CD4-positive, alpha-beta memory T cell (primary cell): ENCODE measurements at regions of chr6 and their contacts with region 1.

Region 1: DNA sequence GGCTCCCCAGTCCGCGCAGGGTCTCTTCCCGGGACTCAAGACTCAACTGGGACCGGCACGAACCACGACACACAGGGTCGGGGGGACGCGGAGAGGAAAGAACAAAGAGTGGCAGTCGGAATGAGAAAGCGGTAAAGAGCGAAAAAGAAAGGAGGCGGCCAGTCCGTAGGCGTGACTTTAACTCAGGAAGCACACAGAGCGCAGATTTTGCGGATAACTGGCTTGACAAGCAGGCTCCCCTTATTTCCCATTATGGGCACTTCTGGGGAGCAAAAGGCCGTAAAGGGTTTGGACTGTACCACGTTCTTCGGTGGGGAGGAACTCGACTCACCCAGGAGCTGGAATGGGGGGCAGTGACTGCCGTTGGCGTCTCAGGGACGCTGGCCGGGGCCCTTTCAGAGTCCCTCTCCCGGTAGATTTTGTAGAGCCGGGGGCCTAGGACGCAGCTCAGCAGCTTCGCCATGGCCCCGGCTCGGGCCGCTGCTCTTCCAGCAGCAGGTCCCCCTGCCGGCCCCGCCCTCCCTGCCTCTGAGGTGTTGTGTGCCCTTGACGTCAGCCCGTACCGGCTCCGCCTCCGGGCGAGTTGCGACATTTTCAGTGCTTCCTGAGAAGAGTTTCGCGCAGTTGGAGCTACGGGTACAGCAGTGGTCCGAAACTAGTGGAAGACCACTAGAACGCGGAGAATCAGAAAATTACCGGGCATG is at the start of gene ABHD16A:
- DNase-seq: peak; percentile 96 to 98 (median 97)
- H3K4me3 ChIP-seq: peak within 1 kb of the TSS; percentile 70 to 82
- H3K4me3 Mint-ChIP-seq: peak within 1 kb of the TSS; percentile 97 to 99 (median 98)
- H3K27ac ChIP-seq: peak within 1 kb of the TSS; percentile 97
- H3K27ac Mint-ChIP-seq: peak within 1 kb of the TSS; percentile 93 to 99 (median 98)
- H3K4me1 ChIP-seq: peaks cover 28% of the 10 kb centered on the region
- H3K4me1 Mint-ChIP-seq: peaks cover 21 to 44% (median 34%) of the 10 kb centered on the region in 4 donors
- H3K27me3 ChIP-seq: no peaks in the 10 kb centered on the region
- H3K27me3 Mint-ChIP-seq: no peaks in the 10 kb centered on the region
- total RNA-seq, gene ABHD16A: 66.0 to 69.2 TPM

Region 2: DNA sequence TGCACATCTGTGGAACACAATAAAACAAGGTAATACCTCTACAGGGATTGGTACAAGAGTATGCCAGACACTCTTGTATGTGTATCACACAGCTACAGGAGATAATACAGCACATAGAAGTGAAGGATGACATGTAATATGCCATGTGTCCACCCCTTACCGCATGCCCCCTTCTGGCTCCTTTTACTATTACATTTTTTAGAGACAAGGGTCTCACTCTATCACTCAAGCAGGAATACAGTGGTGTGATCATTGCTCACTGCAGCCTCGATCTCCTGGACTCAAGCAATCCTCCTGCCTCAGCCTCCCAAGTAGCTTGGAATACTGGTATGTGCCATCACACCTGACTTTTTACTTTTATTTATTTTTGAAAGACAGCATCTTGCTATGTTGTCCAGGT is 106.0 kb before region 1 on chr6:
- CTCF ChIA-PET with region 1: no interaction called
- POLR2A ChIA-PET with region 1: no interaction called
- intact Hi-C with region 1: no loop called
- DNase-seq: peak; percentile 66 to 79 (median 75)
- H3K4me3 ChIP-seq: no peak overlapping the region
- H3K4me3 Mint-ChIP-seq: peak overlapping the region in 5 of 8 donors; percentile 33 to 66 (median 43)
- H3K27ac ChIP-seq: no peak overlapping the region
- H3K27ac Mint-ChIP-seq: peak overlapping the region; percentile 60 to 89 (median 77)
- H3K4me1 ChIP-seq: peaks cover 60% of the 10 kb centered on the region
- H3K4me1 Mint-ChIP-seq: peaks cover 27 to 56% (median 45%) of the 10 kb centered on the region in 4 donors
- H3K27me3 ChIP-seq: no peaks in the 10 kb centered on the region
- H3K27me3 Mint-ChIP-seq: no peaks in the 10 kb centered on the region

Region 3: GRCh38 chr6:31619805-31620585 is 83.0 kb before region 1 on chr6:
- CTCF ChIA-PET with region 1: no interaction called
- POLR2A ChIA-PET with region 1: no interaction called
- intact Hi-C with region 1: loop called (anchors 1 kb)
- DNase-seq: peak; percentile 96 to 98 (median 98)
- H3K4me3 ChIP-seq: peak overlapping the region in 1 of 2 donors; percentile 93
- H3K4me3 Mint-ChIP-seq: peak overlapping the region; percentile 89 to 98 (median 93)
- H3K27ac ChIP-seq: peak overlapping the region; percentile 99
- H3K27ac Mint-ChIP-seq: peak overlapping the region; percentile 91 to 99 (median 98)
- H3K4me1 ChIP-seq: peaks cover 34% of the 10 kb centered on the region
- H3K4me1 Mint-ChIP-seq: peaks cover 21 to 49% (median 39%) of the 10 kb centered on the region in 4 donors
- H3K27me3 ChIP-seq: no peaks in the 10 kb centered on the region
- H3K27me3 Mint-ChIP-seq: no peaks in the 10 kb centered on the region

Region 4: DNA sequence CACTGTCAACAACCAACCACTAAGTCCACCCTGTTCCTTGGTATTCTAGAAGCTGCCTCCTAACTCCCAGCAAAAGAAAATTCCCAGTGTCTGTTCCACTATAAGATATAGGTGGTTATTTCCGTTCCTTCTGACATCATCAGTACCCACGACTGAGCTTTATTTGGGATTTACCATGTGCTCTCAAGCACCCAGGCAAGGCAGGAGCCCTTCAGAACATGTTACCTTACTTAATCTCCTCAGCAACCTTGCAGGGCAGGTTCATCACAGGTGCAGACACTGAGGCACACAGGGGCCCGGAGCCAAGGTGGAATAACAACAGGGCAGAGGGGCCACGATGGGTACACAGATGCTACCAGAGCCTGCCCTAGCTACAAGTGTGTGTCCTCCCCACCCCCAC is 10.6 kb before region 1 on chr6:
- CTCF ChIA-PET with region 1: no interaction called
- POLR2A ChIA-PET with region 1: interaction called, 15 read pairs
- intact Hi-C with region 1: no loop called
- DNase-seq: no peak
- H3K4me3 ChIP-seq: no peak overlapping the region
- H3K4me3 Mint-ChIP-seq: no peak overlapping the region
- H3K27ac ChIP-seq: no peak overlapping the region
- H3K27ac Mint-ChIP-seq: peak overlapping the region in 5 of 7 donors; percentile 7 to 63 (median 27)
- H3K4me1 ChIP-seq: peaks cover 2% of the 10 kb centered on the region
- H3K4me1 Mint-ChIP-seq: peaks cover 2 to 4% (median 2%) of the 10 kb centered on the region in 4 donors
- H3K27me3 ChIP-seq: no peaks in the 10 kb centered on the region
- H3K27me3 Mint-ChIP-seq: no peaks in the 10 kb centered on the region

Region 5: DNA sequence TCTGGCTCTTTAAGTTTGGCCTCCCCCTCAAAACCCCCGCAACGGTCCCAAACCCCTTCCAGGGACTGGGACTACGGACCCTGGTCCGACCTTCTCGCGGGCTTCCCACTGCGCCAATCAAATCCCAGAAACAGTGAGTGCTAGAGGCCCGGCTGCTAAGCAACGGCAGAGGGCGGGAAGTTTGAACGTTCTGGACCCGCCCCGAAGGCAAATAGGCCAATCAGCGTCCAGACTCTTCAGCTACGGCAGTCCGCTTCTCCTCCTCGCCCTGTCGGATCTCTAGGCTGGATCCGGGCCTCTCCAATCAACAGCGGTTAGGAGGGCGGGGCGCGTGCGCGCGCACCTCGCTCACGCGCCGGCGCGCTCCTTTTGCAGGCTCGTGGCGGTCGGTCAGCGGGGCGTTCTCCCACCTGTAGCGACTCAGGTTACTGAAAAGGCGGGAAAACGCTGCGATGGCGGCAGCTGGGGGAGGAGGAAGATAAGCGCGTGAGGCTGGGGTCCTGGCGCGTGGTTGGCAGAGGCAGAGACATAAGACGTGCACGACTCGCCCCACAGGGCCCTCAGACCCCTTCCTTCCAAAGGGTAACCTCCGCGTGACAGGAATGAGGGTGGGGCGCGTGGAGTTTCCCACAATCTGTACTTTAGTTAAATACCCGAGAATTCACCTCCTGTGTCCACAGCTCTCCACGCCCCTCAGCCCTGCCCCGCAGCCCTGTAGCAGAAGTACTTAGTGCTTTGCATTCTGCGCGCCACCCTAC is 36.8 kb after region 1 on chr6 and contains the start of gene MSH5:
- CTCF ChIA-PET with region 1: no interaction called
- POLR2A ChIA-PET with region 1: interaction called, 12 read pairs
- intact Hi-C with region 1: loop called (anchors 2 kb)
- DNase-seq: peak; percentile 92 to 97 (median 94)
- H3K4me3 ChIP-seq: peak within 1 kb of the TSS; percentile 82
- H3K4me3 Mint-ChIP-seq: peak within 1 kb of the TSS; percentile 89 to 99 (median 98)
- H3K27ac ChIP-seq: peak within 1 kb of the TSS; percentile 64
- H3K27ac Mint-ChIP-seq: peak within 1 kb of the TSS; percentile 94 to 97 (median 95)
- H3K4me1 ChIP-seq: peaks cover 42% of the 10 kb centered on the region
- H3K4me1 Mint-ChIP-seq: peaks cover 33 to 64% (median 51%) of the 10 kb centered on the region in 4 donors
- H3K27me3 ChIP-seq: no peaks in the 10 kb centered on the region
- H3K27me3 Mint-ChIP-seq: no peaks in the 10 kb centered on the region
- total RNA-seq, gene MSH5: 11.4 to 12.1 TPM

Region 6: DNA sequence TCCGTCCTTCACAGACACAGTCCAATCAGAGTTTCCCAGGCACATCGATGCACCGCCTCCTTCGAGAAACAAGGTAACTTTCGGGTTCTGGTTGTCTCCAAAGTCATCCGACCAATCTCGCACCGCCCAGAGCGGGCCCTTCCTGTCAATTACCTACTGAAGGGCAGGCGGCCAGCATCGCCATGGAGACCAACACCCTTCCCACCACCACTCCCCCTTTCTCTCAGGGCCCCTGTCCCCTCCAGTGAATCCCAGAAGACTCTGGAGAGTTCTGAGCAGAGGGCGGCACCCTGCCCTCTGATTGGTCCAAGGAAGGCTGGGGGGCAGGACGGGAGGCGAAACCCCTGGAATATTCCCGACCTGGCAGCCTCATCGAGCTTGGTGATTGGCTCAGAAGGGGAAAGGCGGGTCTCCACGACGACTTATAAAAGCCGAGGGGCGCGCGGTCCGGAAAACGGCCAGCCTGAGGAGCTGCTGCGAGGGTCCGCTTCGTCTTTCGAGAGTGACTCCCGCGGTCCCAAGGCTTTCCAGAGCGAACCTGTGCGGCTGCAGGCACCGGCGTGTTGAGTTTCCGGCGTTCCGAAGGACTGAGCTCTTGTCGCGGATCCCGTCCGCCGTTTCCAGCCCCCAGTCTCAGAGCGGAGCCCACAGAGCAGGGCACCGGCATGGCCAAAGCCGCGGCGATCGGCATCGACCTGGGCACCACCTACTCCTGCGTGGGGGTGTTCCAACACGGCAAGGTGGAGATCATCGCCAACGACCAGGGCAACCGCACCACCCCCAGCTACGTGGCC is 124.5 kb after region 1 on chr6 and contains the start of gene HSPA1B:
- CTCF ChIA-PET with region 1: interaction called, 8 read pairs
- POLR2A ChIA-PET with region 1: interaction called, 22 read pairs
- intact Hi-C with region 1: no loop called
- DNase-seq: peak; percentile 86 to 89 (median 87)
- H3K4me3 ChIP-seq: peak within 1 kb of the TSS; percentile 67 to 90
- H3K4me3 Mint-ChIP-seq: peak within 1 kb of the TSS; percentile 88 to 98 (median 95)
- H3K27ac ChIP-seq: peak within 1 kb of the TSS; percentile 83
- H3K27ac Mint-ChIP-seq: peak within 1 kb of the TSS; percentile 93 to 99 (median 96)
- H3K4me1 ChIP-seq: peaks cover 45% of the 10 kb centered on the region
- H3K4me1 Mint-ChIP-seq: peaks cover 18 to 55% (median 37%) of the 10 kb centered on the region in 4 donors
- H3K27me3 ChIP-seq: no peaks in the 10 kb centered on the region
- H3K27me3 Mint-ChIP-seq: no peaks in the 10 kb centered on the region
- total RNA-seq, gene HSPA1B: 58.0 to 60.8 TPM

Region 7: DNA sequence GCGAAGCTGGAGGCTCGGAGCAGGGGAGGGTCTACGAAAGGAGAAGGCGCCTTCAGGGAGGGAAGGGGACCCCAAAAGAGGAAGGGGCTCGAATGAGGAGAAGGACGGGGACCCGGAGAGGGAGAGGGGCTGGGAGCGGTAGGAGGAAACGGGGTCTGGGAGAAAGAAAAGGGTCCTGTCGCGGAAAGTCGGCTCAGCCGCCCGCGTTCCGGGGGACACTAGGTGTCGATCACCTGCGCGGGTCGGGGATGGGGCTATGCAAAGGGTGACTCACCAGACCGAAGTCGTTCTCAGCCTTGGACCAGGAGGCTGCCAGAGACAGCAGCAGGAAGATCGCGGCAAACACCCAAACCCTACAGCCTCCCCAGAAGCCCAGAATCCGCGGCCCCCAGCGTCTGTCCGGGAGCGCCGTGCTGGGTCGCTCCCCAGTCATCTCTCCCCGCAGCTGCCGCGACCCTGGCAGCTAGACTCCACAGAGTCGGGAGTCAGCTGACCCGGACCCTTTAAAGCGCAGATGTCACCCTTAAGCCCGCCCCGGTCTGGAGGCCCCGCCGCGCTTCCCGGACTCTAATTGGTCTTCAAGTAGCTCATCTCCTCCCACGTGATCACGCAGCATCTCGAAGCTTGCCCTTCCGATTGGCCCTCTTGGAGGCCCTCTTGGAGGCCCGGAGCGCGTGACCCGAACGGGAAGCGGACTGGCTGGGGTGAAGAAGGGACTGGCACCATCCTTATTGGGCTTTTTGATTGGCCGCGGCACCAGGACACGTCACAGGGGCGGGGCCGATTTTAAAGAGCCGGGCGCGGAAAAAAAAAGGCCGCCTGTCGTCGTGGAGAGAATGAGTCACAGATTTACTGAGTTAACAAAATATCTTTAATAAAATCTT is 159.6 kb after region 1 on chr6 and contains the start of gene NEU1:
- CTCF ChIA-PET with region 1: interaction called, 4 read pairs
- POLR2A ChIA-PET with region 1: interaction called, 9 read pairs
- intact Hi-C with region 1: loop called (anchors 1 kb)
- DNase-seq: peak; percentile 97 to 100 (median 100)
- H3K4me3 ChIP-seq: peak within 1 kb of the TSS; percentile 88 to 95
- H3K4me3 Mint-ChIP-seq: peak within 1 kb of the TSS; percentile 87 to 96 (median 94)
- H3K27ac ChIP-seq: peak within 1 kb of the TSS; percentile 90
- H3K27ac Mint-ChIP-seq: peak within 1 kb of the TSS; percentile 94 to 98 (median 97)
- H3K4me1 ChIP-seq: peaks cover 16% of the 10 kb centered on the region
- H3K4me1 Mint-ChIP-seq: peaks cover 14 to 33% (median 23%) of the 10 kb centered on the region in 4 donors
- H3K27me3 ChIP-seq: no peaks in the 10 kb centered on the region
- H3K27me3 Mint-ChIP-seq: peaks cover 0 to 2% of the 10 kb centered on the region in 2 donors
- total RNA-seq, gene NEU1: 19.6 to 21.1 TPM

Region 8: GRCh38 chr6:31922942-31923341 is 220.0 kb after region 1 on chr6:
- CTCF ChIA-PET with region 1: no interaction called
- POLR2A ChIA-PET with region 1: no interaction called
- intact Hi-C with region 1: no loop called
- DNase-seq: peak in 1 of 5 donors; percentile 19
- H3K4me3 ChIP-seq: no peak overlapping the region
- H3K4me3 Mint-ChIP-seq: no peak overlapping the region
- H3K27ac ChIP-seq: no peak overlapping the region
- H3K27ac Mint-ChIP-seq: peak overlapping the region in 1 of 7 donors; percentile 7
- H3K4me1 ChIP-seq: no peaks in the 10 kb centered on the region
- H3K4me1 Mint-ChIP-seq: no peaks in the 10 kb centered on the region
- H3K27me3 ChIP-seq: no peaks in the 10 kb centered on the region
- H3K27me3 Mint-ChIP-seq: no peaks in the 10 kb centered on the region